ENCODE measurements at regions of chr6 and their contacts with region 1.

Region 1: DNA sequence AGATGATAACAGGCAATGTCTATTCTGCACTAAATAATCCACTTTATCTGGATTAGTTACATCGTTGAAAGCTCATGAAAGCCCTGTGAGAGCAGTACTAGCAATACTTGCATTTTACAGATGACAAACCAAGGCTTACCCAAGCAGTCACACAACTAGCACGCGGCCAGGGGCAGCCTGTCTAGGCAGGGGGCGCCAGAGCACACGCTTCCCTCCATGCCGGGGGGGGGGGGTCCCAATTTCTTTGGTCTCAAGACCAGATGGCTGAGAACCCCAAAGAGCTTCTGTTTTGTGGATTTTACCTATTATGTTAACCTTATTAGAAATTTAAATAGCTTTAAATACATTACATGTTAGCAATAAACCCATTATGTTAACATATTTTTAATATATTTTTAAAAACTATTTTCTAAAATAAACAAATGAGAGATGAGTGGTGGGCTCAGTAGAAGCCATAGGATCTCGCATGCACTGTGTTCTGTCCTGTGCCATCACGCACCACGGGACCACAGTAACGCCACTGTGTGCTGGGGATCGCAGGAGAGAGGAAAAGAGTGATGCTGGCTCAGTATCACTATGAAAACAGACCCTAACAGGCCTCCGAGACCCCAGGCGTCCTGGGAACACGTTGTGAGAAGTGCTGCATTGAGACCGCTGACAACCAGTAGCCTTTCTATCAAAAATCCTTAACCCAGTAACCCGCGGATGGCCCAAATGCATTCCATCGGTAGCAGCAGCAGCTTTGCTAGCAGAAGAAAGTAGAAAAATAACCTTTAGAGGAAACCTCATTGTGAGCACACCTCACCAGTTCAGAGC is 5.3 kb upstream of the PRR18 start:
- DNase-seq: peak in 1 of 2 experiments; percentile 65
- H3K4me3 ChIP-seq: no peak overlapping the region
- H3K27ac ChIP-seq: no peak overlapping the region
- H3K4me1 ChIP-seq: peaks cover 0 to 4% (median 1%) of the 10 kb centered on the region in 4 experiments; a peak in 1 of 7 replicates
- H3K27me3 ChIP-seq: peaks cover 9 to 21% (median 20%) of the 10 kb centered on the region in 4 experiments
- CTCF ChIP-seq: peak; percentile 78 to 88 (median 82)
- EP300 ChIP-seq: no peak
- POLR2A ChIP-seq: no peak
- RAD21 ChIP-seq: peak; percentile 82 to 85

Region 2: GRCh38 chr6:166275714-166276166 is 37.7 kb before region 1 on chr6:
- CTCF ChIA-PET with region 1: interaction called, 18 read pairs
- POLR2A ChIA-PET with region 1: no interaction called
- DNase-seq: peak in 1 of 2 experiments; percentile 98
- H3K4me3 ChIP-seq: no peak overlapping the region
- H3K27ac ChIP-seq: no peak overlapping the region
- H3K4me1 ChIP-seq: no peaks in the 10 kb centered on the region
- H3K27me3 ChIP-seq: peaks cover 0 to 8% (median 0%) of the 10 kb centered on the region in 4 experiments; a peak in 2 of 7 replicates
- CTCF ChIP-seq: peak; percentile 88 to 99 (median 88)
- EP300 ChIP-seq: no peak
- POLR2A ChIP-seq: no peak
- RAD21 ChIP-seq: peak; percentile 97 to 98

Region 3: GRCh38 chr6:166281104-166281503 is 32.4 kb before region 1 on chr6:
- CTCF ChIA-PET with region 1: interaction called, 18 read pairs
- POLR2A ChIA-PET with region 1: no interaction called
- DNase-seq: no peak
- H3K4me3 ChIP-seq: no peak overlapping the region
- H3K27ac ChIP-seq: no peak overlapping the region
- H3K4me1 ChIP-seq: no peaks in the 10 kb centered on the region
- H3K27me3 ChIP-seq: peaks cover 0 to 7% (median 0%) of the 10 kb centered on the region in 4 experiments; a peak in 3 of 7 replicates
- CTCF ChIP-seq: no peak
- EP300 ChIP-seq: no peak
- POLR2A ChIP-seq: no peak
- RAD21 ChIP-seq: no peak

Region 4: GRCh38 chr6:166325383-166326042 is 12.1 kb after region 1 on chr6:
- CTCF ChIA-PET with region 1: interaction called, 27 read pairs
- POLR2A ChIA-PET with region 1: interaction called, 3 read pairs
- DNase-seq: peak in 1 of 2 experiments; percentile 35
- H3K4me3 ChIP-seq: no peak overlapping the region
- H3K27ac ChIP-seq: no peak overlapping the region
- H3K4me1 ChIP-seq: peaks cover 0 to 3% (median 2%) of the 10 kb centered on the region in 4 experiments; a peak in 2 of 7 replicates
- H3K27me3 ChIP-seq: no peaks in the 10 kb centered on the region
- CTCF ChIP-seq: no peak
- EP300 ChIP-seq: no peak
- POLR2A ChIP-seq: no peak
- RAD21 ChIP-seq: no peak

Region 5: DNA sequence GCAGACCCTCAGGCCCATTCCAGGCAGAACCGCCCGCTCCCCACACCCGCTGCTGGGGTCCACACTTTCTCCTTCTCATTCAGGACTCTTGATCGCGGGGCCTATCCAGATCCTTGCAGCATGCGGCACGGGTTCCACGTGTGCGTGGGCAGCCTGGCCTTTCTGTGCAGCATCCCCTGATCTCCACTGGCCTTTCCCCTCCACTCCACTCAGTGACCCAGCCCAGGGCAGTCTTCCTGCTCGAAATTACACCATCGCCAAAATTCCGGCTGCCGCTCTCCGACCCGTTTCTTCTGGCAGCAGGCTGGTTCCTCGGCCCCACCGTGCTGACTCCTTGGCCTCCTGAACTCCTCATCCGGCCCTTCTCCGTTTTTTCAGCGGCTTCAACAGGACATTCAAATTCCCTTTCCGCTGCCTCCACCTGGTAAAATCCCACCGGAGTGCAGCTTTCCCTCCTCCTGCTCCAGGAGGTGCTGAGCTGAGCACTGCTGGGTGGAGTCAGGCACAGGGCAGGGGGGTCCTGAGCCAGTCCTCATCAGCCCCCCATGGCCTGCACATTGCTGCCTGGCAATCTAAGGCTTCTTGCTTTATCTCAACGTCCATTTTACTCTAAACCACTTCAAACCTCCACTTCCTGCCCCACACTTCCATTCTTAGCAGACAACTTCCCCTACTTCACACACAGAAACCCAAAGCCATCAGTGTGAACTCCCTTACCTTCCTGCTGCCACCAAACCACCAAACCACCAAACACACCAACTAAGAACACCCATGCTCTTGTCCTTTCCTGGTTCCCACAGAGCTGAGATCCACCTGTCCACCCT is 19.9 kb after region 1 on chr6:
- CTCF ChIA-PET with region 1: interaction called, 12 read pairs
- POLR2A ChIA-PET with region 1: interaction called, 4 read pairs
- DNase-seq: no peak
- H3K4me3 ChIP-seq: no peak overlapping the region
- H3K27ac ChIP-seq: no peak overlapping the region
- H3K4me1 ChIP-seq: peaks cover 0 to 6% (median 4%) of the 10 kb centered on the region in 4 experiments; a peak in 3 of 7 replicates
- H3K27me3 ChIP-seq: no peaks in the 10 kb centered on the region
- CTCF ChIP-seq: no peak
- EP300 ChIP-seq: no peak
- POLR2A ChIP-seq: no peak
- RAD21 ChIP-seq: no peak

Region 6: DNA sequence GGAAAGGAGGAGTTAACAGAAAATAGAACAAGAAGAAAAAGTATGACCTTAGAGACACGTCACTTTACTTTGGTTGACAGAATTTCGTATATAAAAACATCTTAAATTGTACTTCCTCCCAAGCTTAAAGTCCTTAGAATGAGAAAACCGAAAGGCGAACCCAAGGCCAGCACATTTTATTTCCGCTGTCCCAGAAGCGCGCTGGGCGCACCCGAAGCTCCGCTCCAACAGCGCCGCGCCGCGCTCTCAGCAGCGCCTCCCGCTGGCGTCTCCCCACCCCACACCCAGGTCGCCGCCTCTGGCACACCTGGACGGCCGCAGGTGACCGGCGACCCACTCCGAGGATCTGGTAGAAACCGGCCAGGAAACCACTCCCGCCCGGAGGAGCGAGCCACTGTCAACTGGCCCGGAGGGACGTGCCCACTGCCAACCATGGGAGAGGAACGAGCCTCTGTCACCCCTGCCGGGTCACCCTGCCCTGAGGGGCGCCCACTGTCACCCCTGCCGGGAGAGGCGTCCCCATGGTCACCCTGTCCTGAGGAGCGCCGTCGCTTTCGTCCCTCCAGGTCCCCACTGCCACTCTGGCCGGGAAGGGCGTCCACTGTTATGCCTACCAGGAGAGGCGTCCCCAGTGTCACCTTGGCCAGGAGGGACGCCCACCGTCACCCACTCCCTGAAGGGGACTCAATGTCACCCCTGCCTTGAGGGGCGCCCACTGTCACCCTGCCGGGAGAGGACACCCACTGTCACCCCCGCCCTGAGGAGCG is 68.5 kb after region 1 on chr6:
- CTCF ChIA-PET with region 1: interaction called, 88 read pairs
- POLR2A ChIA-PET with region 1: interaction called, 8 read pairs
- DNase-seq: peak in 1 of 2 experiments; percentile 93
- H3K4me3 ChIP-seq: peak overlapping the region; percentile 59 to 83 (median 62)
- H3K27ac ChIP-seq: no peak overlapping the region
- H3K4me1 ChIP-seq: peaks cover 0 to 4% (median 1%) of the 10 kb centered on the region in 4 experiments; a peak in 3 of 7 replicates
- H3K27me3 ChIP-seq: no peaks in the 10 kb centered on the region
- CTCF ChIP-seq: peak; percentile 69 to 90 (median 88)
- EP300 ChIP-seq: no peak
- POLR2A ChIP-seq: no peak
- RAD21 ChIP-seq: peak; percentile 64 to 74

Region 7: GRCh38 chr6:166499350-166500163 is 186.1 kb after region 1 on chr6:
- CTCF ChIA-PET with region 1: no interaction called
- POLR2A ChIA-PET with region 1: no interaction called
- DNase-seq: no peak
- H3K4me3 ChIP-seq: no peak overlapping the region
- H3K27ac ChIP-seq: no peak overlapping the region
- H3K4me1 ChIP-seq: 0 out of 7 replicates have a peak, but pooled peaks cover 0 to 2% (median 0%) of the 10 kb centered on the region in 4 experiments
- H3K27me3 ChIP-seq: no peaks in the 10 kb centered on the region
- CTCF ChIP-seq: no peak
- EP300 ChIP-seq: no peak
- POLR2A ChIP-seq: no peak
- RAD21 ChIP-seq: no peak

Measured in H1 (cell line).